A673 (cell line): ENCODE measurements at regions of chr4 and their contacts with region 1.

Region 1: DNA sequence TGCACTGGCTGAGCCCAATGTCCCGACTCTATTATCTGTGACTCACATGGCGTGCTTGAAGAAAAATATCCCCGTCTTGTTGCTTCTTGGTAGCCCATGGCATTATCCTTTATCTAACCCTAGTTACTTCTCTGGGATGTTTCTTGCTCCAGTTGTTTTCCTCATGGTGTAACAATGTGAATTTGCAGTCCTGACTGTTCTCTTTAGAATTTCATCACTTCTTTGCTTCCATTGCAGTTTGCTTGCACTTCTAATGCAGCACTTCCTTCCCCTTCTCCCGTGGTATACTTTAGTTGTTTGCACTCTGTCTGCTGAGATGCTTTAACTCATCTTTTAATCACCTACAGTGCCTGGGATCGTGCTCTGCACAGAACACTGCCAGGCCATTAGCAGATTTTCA is 126.9 kb downstream of the MAML3 start:
- DNase-seq: no peak
- H3K4me3 ChIP-seq: no peak overlapping the region
- H3K27ac ChIP-seq: no peak overlapping the region
- H3K4me1 ChIP-seq: no peaks in the 10 kb centered on the region
- H3K27me3 ChIP-seq: no peaks in the 10 kb centered on the region
- CTCF ChIP-seq: no peak

Region 2: DNA sequence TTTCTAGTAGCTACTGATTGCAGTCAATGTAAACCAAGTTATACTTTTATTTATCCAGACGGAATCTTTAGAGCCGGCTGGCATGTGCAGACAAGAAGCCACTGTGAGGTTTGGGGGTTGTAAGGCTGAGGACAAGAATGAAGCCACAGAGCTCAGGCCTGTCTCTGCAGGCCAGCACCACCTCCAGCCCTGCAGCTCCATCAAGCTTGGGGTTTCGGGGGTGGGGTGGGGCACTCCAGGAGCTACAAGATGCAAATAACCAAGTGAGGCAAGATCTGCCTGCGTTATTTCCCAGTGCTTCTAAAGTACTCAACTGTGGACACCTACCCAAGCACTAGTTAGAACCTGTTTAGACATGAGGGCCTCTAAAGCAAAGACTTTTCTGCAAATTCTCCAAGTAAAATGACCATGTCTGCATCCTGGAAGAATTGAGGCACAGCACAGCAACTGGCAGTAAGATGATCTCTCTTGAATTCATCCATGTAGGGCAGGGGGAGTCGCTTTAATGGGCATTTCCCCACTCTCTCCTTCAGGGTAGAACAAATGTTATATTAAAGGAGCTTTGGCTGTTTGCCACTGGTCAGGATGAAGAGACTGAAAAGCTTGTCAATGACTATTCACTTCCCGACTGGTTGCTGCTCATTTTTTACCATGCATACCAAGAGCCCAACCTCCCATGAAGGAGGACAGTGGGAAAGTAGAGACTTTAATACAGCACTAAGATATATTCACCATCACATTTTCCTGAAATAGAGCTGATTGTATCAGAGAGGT is 139.0 kb before region 1 on chr4:
- CTCF ChIA-PET with region 1: no interaction called
- POLR2A ChIA-PET with region 1: interaction called, 14 read pairs
- intact Hi-C with region 1: no loop called
- DNase-seq: no peak
- H3K4me3 ChIP-seq: no peak overlapping the region
- H3K27ac ChIP-seq: no peak overlapping the region
- H3K4me1 ChIP-seq: no peaks in the 10 kb centered on the region
- H3K27me3 ChIP-seq: no peaks in the 10 kb centered on the region
- CTCF ChIP-seq: no peak

Region 3: GRCh38 chr4:140168474-140168873 is 141.4 kb after region 1 on chr4:
- CTCF ChIA-PET with region 1: no interaction called
- POLR2A ChIA-PET with region 1: no interaction called
- intact Hi-C with region 1: no loop called
- DNase-seq: no peak
- H3K4me3 ChIP-seq: no peak overlapping the region
- H3K27ac ChIP-seq: no peak overlapping the region
- H3K4me1 ChIP-seq: no peaks in the 10 kb centered on the region
- H3K27me3 ChIP-seq: no peaks in the 10 kb centered on the region
- CTCF ChIP-seq: no peak